AG04450 (cell line): ENCODE measurements at regions of chr4 and their contacts with region 1.

Region 1: DNA sequence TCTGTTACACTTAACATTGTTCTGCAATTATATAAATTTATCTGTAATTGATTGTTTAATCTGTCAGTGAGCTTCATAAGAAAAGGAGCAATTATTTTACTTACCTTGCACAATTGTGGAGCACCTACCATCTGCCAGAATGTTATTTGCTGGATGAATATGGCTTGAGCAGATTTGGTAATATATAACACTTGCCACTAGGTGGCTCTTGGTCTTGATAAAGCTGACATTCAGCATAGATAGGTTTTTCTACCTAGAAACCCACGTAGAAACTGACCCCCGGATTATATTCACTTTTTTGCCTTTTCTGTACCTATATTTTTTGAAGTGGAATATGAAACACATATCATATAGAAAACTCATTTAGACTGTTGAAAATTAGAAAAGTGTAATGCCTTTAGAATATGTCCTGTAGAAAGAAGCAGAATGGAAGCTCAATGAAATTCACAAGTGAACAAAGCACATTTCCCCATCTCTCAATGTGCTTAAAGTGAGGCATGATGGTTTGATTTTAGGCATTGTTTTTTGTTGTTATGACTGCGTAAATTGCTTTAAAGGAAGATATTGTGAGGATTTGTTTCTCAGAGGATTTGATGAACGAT is 9.5 kb downstream of the RBPJ start:
- DNase-seq: no peak
- H3K4me3 ChIP-seq: no peak overlapping the region
- H3K27ac ChIP-seq: no peak overlapping the region
- H3K27me3 ChIP-seq: no peaks in the 10 kb centered on the region
- CTCF ChIP-seq: peak; percentile 74

Region 2: GRCh38 chr4:25986807-25987206 is 343.5 kb before region 1 on chr4:
- CTCF ChIA-PET with region 1: interaction called, 34 read pairs
- POLR2A ChIA-PET with region 1: no interaction called
- DNase-seq: no peak
- H3K4me3 ChIP-seq: no peak overlapping the region
- H3K27ac ChIP-seq: no peak overlapping the region
- H3K27me3 ChIP-seq: peaks cover 3% of the 10 kb centered on the region
- CTCF ChIP-seq: no peak

Region 3: DNA sequence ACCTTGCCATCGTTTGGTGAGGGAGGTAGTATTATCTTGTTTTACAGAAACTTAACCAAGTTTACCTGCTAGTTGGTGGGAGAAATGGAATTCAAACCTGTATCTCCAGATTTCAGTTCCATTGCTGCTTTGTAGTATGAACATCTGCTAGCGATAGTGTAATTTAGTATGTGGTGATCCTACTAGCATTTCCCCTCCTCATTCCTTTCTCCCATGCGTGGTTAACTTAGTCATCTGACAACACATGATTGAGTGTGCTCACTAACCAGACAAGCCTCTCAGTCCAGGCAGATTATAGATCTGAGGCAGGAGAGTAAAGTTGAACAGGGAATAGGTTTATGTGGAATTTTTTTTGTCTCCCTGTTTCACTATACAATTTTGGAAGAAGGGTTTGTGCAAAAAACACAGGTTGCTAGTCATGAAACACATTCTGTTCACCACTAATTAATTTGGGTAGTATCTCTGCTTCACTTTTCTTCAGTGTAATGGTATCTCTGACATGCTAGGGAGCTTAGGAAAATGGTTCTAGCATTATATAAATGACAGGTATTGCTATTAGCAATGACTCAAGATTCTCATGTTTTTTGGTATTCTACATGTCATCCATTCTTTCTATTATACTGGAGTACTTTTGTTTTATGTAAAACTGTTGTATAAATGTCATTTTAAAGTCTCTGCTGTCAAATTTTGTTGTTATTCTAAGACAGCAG is 12.2 kb after region 1 on chr4:
- CTCF ChIA-PET with region 1: interaction called, 43 read pairs
- POLR2A ChIA-PET with region 1: no interaction called
- DNase-seq: peak; percentile 75
- H3K4me3 ChIP-seq: no peak overlapping the region; the same call in 1 of the 2 replicates
- H3K27ac ChIP-seq: peak overlapping the region; percentile 71
- H3K27me3 ChIP-seq: no peaks in the 10 kb centered on the region
- CTCF ChIP-seq: no peak

Region 4: GRCh38 chr4:26372525-26373172 is 42.4 kb after region 1 on chr4:
- CTCF ChIA-PET with region 1: interaction called, 15 read pairs
- POLR2A ChIA-PET with region 1: interaction called, 14 read pairs
- DNase-seq: peak; percentile 21
- H3K4me3 ChIP-seq: no peak overlapping the region
- H3K27ac ChIP-seq: peak overlapping the region; percentile 65
- H3K27me3 ChIP-seq: no peaks in the 10 kb centered on the region
- CTCF ChIP-seq: no peak

Region 5: DNA sequence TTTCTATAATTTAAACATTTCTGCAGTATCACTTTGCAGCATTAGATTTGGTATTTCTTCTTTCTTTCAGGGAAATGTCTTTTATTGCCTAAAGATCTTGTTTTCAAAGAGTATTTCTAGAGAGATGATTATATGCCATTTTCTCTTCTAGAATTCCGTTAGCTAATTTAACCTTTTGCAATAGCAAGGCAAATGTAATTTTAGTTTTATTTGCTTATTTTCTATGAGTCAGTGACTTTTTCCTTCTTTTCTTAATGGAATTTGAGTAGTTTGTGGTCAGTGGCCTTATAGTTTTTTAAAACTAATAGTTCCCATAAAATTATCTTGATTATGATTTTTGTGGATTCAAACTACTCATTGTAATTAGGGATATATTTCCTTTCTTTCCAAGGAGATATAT is 87.8 kb after region 1 on chr4:
- CTCF ChIA-PET with region 1: interaction called, 141 read pairs
- POLR2A ChIA-PET with region 1: no interaction called
- DNase-seq: no peak
- H3K4me3 ChIP-seq: no peak overlapping the region
- H3K27ac ChIP-seq: no peak overlapping the region
- H3K27me3 ChIP-seq: no peaks in the 10 kb centered on the region
- CTCF ChIP-seq: no peak

Region 6: DNA sequence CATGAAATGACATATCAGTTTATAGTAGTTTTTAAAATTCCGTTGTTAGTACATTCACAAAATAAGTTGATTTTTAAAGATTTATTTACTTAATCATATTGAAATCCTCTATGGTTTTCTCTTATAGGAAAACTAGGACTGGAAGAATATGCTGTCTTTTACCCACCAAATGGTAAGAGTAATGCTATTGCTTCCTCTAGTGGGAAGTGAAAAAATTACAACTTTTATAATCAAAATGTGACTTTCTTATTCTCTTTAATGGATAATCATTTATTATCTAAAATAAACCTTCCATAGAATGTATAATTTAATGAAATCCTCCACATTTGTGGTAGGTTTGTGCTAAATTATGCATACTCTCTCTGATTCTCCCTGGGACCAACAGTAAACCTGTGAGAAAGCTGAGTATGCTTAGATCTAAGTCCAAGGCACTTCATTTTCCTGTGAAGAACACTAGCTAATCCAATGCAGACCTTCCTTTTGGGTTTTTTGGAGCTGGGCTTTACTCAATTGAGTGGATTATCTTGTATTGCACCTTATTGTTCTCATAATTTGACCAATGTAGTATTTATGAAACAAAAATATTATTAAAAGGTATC is 389.8 kb after region 1 on chr4:
- CTCF ChIA-PET with region 1: interaction called, 13 read pairs
- POLR2A ChIA-PET with region 1: no interaction called
- DNase-seq: no peak
- H3K4me3 ChIP-seq: no peak overlapping the region
- H3K27ac ChIP-seq: no peak overlapping the region
- H3K27me3 ChIP-seq: no peaks in the 10 kb centered on the region
- CTCF ChIP-seq: peak; percentile 88